GM18951 (cell line): ENCODE measurements at regions of chr13 and their contacts with region 1.

Region 1: DNA sequence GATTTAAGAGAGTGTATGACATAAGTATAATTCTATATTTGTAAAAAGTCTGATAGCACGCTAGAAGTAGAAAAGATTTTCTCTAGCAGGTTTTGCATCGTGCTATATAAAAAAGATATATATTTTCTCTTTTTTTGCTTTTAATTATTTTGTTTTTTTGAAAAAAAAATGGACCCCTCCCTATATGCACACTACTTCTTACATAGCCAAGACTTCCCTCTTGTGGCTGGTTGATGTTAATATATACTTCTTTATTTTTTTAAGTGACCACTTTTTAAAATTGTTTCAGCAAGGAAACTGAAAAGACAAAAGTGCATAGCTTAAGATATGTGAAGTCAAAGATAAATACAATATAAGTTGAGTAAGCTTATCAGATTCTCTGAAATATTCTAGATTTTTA is 1202.8 kb downstream of the DIAPH3 start:
- POLR2A ChIP-seq: no peak

Region 2: GRCh38 chr13:57624565-57625435 is 1336.1 kb before region 1 on chr13:
- in situ Hi-C with region 1: loop called (anchors 25 kb)
- POLR2A ChIP-seq: no peak